ENCODE measurements at regions of chr14 and their contacts with region 1.

Region 1: DNA sequence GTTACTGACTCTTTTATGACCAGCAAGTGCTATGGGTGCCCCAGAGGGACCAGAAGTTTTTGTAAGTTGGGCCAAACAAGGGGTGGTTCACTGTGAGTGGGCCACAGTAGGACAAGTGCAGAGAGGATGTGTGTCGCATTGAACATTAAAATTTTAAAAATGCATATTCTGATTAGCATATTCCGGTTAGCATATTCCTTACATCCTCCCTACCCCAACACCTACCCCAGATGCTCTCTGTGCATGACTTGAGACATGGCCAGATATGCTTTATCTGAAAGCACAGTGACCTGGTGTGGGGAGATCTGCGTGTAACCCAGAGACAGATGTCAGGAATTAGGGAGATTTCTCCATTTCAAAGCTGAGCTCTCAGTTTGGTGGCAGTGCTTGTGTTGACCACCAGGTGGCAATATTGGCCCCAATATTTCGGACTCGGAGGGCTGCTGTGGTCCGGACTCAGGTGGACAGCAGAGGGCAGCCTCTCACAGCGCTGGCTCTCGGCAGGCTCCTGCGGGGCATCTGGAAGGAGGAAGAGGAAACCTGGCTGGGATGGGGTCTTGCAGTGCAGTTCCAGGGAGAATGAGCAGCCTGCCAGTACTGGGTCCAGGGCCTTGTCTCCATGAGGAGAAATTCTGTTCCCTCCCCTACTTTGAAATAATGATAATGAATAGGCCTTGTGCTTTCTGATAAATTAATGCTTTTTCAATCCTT is 1.6 kb upstream of the CEBPE start:
- DNase-seq: peak; percentile 50 to 90 (median 79)
- ATAC-seq: peak; percentile 70
- H3K4me3 ChIP-seq: peak overlapping the region in 1 of 2 experiments; percentile 18
- H3K4me3 Mint-ChIP-seq: peak overlapping the region; percentile 77
- H3K27ac ChIP-seq: peak overlapping the region; percentile 47 to 59
- H3K27ac Mint-ChIP-seq: peak overlapping the region; percentile 96
- H3K4me1 ChIP-seq: peaks cover 56% of the 10 kb centered on the region
- H3K4me1 Mint-ChIP-seq: peaks cover 60% of the 10 kb centered on the region
- H3K27me3 ChIP-seq: no peaks in the 10 kb centered on the region
- H3K27me3 Mint-ChIP-seq: no peaks in the 10 kb centered on the region
- CTCF ChIP-seq: peak; percentile 98

Region 2: DNA sequence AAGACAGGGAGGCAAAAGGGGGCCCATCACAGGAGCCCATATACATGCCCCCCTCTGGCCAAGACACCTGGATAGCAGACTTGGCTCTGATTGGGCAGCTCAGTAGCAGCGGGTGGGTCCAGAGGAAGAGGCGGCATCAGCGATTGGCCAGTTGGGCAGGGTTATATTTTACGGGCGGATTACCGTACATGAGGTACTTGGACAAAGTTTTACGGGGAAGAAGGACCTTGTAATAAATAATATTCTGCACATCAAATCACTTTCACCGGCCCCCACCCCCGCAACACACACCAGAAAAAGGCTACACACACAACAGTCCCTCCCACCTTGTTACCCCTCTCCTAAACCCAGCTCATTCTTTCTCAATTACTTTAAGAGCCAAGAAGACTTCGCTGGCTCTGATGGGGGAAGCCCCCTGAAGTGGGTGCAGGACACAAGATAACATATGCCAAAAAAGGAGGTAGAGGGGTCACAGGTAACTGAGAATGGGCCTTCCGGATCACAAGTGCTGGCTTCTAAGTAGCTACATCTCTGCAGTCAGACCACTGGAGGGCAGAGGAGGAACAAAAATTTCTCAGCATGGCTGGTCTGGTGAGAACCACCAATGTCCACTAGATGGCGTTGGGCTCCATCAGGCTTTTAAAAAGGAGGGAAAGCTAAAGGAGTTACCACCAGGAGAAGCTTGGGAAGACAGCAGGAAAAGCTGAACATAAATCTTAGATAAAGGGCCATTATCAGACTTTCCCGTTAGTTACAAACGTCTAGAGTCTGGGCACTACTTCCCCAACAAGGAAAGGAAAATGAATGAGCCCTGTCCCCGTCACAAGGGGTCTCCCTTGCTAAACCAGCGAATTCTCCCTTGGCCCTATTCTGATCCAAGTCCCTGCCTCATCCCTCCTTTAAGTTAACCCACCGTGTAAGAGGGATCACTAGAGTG is 52.0 kb before region 1 on chr14:
- CTCF ChIA-PET with region 1: interaction called, 10 read pairs
- POLR2A ChIA-PET with region 1: interaction called, 6 read pairs
- intact Hi-C with region 1: loop called in 1 of 2 experiments (anchors 2 kb)
- DNase-seq: peak; percentile 52 to 90 (median 73)
- ATAC-seq: peak; percentile 76
- H3K4me3 ChIP-seq: no peak overlapping the region
- H3K4me3 Mint-ChIP-seq: no peak overlapping the region
- H3K27ac ChIP-seq: no peak overlapping the region
- H3K27ac Mint-ChIP-seq: peak overlapping the region; percentile 39
- H3K4me1 ChIP-seq: peaks cover 28% of the 10 kb centered on the region
- H3K4me1 Mint-ChIP-seq: peaks cover 46% of the 10 kb centered on the region
- H3K27me3 ChIP-seq: no peaks in the 10 kb centered on the region
- H3K27me3 Mint-ChIP-seq: no peaks in the 10 kb centered on the region
- CTCF ChIP-seq: peak; percentile 99

Region 3: DNA sequence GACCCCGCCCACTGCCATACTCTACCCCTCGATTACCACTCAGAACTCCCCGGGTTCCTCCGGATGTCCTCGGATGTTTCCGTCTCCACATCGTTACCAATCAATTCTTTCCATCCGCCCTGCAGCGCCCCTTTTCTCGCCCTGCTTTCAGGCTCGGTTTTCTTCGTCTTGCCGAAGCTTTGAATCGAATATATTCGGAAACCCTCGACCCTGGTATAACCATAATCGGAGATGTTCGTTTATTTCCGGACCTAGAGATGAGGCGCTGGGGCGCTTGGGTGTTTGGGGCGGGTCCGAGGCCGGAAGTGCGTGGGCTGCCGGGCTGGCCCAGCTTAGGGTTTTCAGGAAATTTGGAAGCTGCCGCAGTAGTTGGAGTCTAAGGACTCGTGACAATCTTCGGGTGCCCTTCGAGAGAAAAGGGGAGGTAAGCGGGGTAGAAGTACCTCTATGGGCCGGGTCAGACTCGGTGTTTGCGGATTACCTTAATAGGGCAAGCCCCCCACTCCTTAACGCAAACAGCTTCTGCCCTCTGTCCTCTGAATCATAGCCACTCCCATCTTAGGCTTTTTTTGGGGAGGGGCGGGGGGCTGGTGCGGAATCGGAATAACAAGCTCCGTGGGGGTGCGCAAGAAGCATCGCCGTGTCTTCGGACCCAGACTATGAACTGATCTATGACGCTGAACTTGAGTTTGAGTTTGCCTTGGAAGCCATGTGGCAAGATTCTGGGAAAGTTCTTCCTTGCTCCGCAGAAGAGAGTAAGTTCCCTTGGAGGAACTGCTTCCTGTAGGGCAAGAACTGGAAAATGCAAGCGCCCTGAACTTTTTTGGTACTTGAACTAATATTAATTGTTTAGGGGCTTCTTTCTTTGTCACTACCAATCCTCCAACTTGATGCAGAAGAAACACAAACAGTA is 25.2 kb before region 1 on chr14 and contains the start of gene C14orf119:
- CTCF ChIA-PET with region 1: interaction called, 20 read pairs
- POLR2A ChIA-PET with region 1: interaction called, 43 read pairs
- intact Hi-C with region 1: loop called (anchors 1 to 2 kb)
- DNase-seq: peak in 8 of 9 experiments; percentile 98 to 100 (median 100)
- ATAC-seq: peak; percentile 86
- H3K4me3 ChIP-seq: peak within 1 kb of the TSS; percentile 81 to 93
- H3K4me3 Mint-ChIP-seq: no peak within 1 kb of the TSS
- H3K27ac ChIP-seq: peak within 1 kb of the TSS; percentile 93 to 98
- H3K27ac Mint-ChIP-seq: no peak within 1 kb of the TSS
- H3K4me1 ChIP-seq: peaks cover 39% of the 10 kb centered on the region
- H3K4me1 Mint-ChIP-seq: peaks cover 51% of the 10 kb centered on the region
- H3K27me3 ChIP-seq: no peaks in the 10 kb centered on the region
- H3K27me3 Mint-ChIP-seq: no peaks in the 10 kb centered on the region
- CTCF ChIP-seq: no peak
- total RNA-seq, gene C14orf119: 3.5 to 3.8 TPM

Region 4: GRCh38 chr14:23151342-23151741 is 30.6 kb after region 1 on chr14:
- CTCF ChIA-PET with region 1: interaction called, 12 read pairs
- POLR2A ChIA-PET with region 1: interaction called, 3 read pairs
- intact Hi-C with region 1: no loop called
- DNase-seq: no peak
- ATAC-seq: no peak
- H3K4me3 ChIP-seq: no peak overlapping the region
- H3K4me3 Mint-ChIP-seq: no peak overlapping the region
- H3K27ac ChIP-seq: no peak overlapping the region
- H3K27ac Mint-ChIP-seq: no peak overlapping the region
- H3K4me1 ChIP-seq: peaks cover 29% of the 10 kb centered on the region
- H3K4me1 Mint-ChIP-seq: peaks cover 23% of the 10 kb centered on the region
- H3K27me3 ChIP-seq: no peaks in the 10 kb centered on the region
- H3K27me3 Mint-ChIP-seq: peaks cover 12% of the 10 kb centered on the region
- CTCF ChIP-seq: no peak

Region 5: DNA sequence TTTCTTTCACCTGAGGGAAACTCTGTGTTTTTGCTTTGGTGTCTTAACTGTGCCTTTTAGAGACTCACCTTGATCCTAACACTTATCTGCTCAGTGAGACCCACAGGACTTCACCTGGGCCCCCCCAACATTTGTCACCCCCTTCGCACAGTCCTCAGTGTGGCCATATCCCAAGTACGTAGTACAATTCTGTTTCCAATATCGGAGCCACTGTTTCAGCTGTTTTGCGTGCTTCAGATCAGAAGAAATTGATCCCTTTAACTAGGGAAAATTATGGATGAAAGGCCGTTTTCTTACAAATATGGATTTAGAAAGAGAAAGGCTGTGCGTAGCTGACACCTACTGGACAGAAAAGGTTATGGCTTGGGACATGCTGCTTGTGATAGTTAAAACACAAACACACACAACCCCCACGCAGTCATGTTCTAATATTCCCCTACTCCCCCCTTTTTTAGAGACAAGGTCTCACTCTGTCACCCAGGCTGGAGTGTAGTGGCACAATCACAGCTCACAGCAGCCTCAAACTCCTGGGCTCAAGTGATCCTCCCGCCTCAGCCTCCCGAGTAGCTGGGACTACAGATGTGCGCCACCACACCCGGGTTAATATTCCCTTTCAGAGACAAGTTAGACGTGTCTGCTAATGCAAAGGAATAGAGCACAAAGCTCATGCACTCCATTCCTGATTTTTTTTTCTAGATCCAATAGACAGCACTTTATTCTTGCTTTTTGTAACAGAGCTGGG is 66.4 kb after region 1 on chr14:
- CTCF ChIA-PET with region 1: interaction called, 255 read pairs
- POLR2A ChIA-PET with region 1: interaction called, 26 read pairs
- intact Hi-C with region 1: loop called (anchors 1 kb)
- DNase-seq: peak in 3 of 9 experiments; percentile 14 to 66 (median 54)
- ATAC-seq: peak; percentile 54
- H3K4me3 ChIP-seq: no peak overlapping the region
- H3K4me3 Mint-ChIP-seq: no peak overlapping the region
- H3K27ac ChIP-seq: no peak overlapping the region
- H3K27ac Mint-ChIP-seq: no peak overlapping the region
- H3K4me1 ChIP-seq: peaks cover 8% of the 10 kb centered on the region
- H3K4me1 Mint-ChIP-seq: peaks cover 4% of the 10 kb centered on the region
- H3K27me3 ChIP-seq: no peaks in the 10 kb centered on the region
- H3K27me3 Mint-ChIP-seq: no peaks in the 10 kb centered on the region
- CTCF ChIP-seq: peak; percentile 57

Region 6: GRCh38 chr14:23379366-23380196 is 258.9 kb after region 1 on chr14:
- CTCF ChIA-PET with region 1: interaction called, 11 read pairs
- POLR2A ChIA-PET with region 1: no interaction called
- intact Hi-C with region 1: loop called (anchors 1 to 2 kb)
- DNase-seq: peak; percentile 41 to 81 (median 69)
- ATAC-seq: peak; percentile 88
- H3K4me3 ChIP-seq: no peak overlapping the region
- H3K4me3 Mint-ChIP-seq: no peak overlapping the region
- H3K27ac ChIP-seq: no peak overlapping the region
- H3K27ac Mint-ChIP-seq: no peak overlapping the region
- H3K4me1 ChIP-seq: no peaks in the 10 kb centered on the region
- H3K4me1 Mint-ChIP-seq: no peaks in the 10 kb centered on the region
- H3K27me3 ChIP-seq: no peaks in the 10 kb centered on the region
- H3K27me3 Mint-ChIP-seq: peaks cover 14% of the 10 kb centered on the region
- CTCF ChIP-seq: peak; percentile 76

Region 7: GRCh38 chr14:23567192-23568020 is 446.7 kb after region 1 on chr14 and contains the start of gene AP1G2:
- CTCF ChIA-PET with region 1: no interaction called
- POLR2A ChIA-PET with region 1: no interaction called
- intact Hi-C with region 1: loop called in 1 of 2 experiments (anchors 10 kb)
- DNase-seq: peak; percentile 66 to 92 (median 84)
- ATAC-seq: peak; percentile 90
- H3K4me3 ChIP-seq: peak within 1 kb of the TSS; percentile 75 to 97
- H3K4me3 Mint-ChIP-seq: peak within 1 kb of the TSS; percentile 99
- H3K27ac ChIP-seq: peak within 1 kb of the TSS; percentile 86
- H3K27ac Mint-ChIP-seq: peak within 1 kb of the TSS; percentile 97
- H3K4me1 ChIP-seq: peaks cover 20% of the 10 kb centered on the region
- H3K4me1 Mint-ChIP-seq: peaks cover 44% of the 10 kb centered on the region
- H3K27me3 ChIP-seq: no peaks in the 10 kb centered on the region
- H3K27me3 Mint-ChIP-seq: peaks cover 1% of the 10 kb centered on the region
- CTCF ChIP-seq: no peak
- total RNA-seq, gene AP1G2: 153 to 160 TPM